ENCODE measurements at regions of chr10 and their contacts with region 1.

Region 1: GRCh38 chr10:23376229-23376655 is 31.6 kb upstream of the C10orf67 start:
- DNase-seq: no peak
- H3K4me3 ChIP-seq: no peak overlapping the region
- H3K27ac ChIP-seq: no peak overlapping the region
- H3K4me1 ChIP-seq: peaks cover 6% of the 10 kb centered on the region
- CTCF ChIP-seq: no peak

Region 2: DNA sequence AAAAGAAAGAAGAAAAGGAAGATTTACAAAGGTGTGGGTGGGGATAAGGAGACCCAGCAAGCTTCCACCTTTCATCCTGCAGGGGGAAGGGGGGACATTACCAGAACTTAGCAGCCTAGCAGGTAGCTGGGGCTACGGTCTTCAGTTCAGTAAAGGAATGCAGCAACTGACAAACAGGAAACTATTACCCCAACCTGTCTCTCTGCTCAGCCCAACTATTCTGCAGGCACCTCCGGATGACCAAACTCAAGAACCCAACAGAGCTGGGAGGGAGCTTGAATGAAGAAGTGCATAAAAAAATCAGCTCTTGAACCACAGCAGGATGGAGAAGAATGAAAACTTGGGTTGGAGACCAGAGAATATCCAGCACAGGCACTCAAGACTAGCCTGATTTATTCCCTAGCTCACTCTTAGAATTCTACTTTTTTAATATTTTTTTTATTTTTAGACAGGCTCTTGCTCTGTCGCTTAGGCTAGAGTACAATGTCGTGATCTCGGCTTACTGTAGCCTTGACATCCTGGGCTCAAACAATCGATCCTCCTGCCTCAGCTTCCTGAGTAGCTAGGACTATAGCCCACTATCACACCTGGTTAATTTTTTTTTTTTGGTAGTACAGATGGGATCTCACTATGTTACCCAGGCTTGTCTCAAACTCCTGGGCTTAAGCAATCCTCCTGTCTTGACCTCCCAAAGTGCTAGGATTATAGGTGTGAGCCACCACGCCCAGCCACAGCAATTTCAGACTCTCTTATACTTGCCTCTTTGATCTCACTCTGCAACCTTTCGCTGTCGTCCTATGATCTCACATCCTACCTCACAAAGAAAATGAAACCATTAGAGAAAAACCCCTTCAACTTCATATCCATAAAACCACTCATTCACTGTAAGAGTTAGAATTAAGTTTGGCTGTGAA is 13.1 kb before region 1 on chr10:
- CTCF ChIA-PET with region 1: no interaction called
- POLR2A ChIA-PET with region 1: interaction called, 17 read pairs
- intact Hi-C with region 1: no loop called
- DNase-seq: peak; percentile 16
- H3K4me3 ChIP-seq: no peak overlapping the region
- H3K27ac ChIP-seq: no peak overlapping the region
- H3K4me1 ChIP-seq: peaks cover 37% of the 10 kb centered on the region
- CTCF ChIP-seq: no peak

Region 3: GRCh38 chr10:23754179-23754578 is 377.9 kb after region 1 on chr10:
- CTCF ChIA-PET with region 1: no interaction called
- POLR2A ChIA-PET with region 1: no interaction called
- intact Hi-C with region 1: no loop called
- DNase-seq: no peak
- H3K4me3 ChIP-seq: no peak overlapping the region
- H3K27ac ChIP-seq: no peak overlapping the region
- H3K4me1 ChIP-seq: no peaks in the 10 kb centered on the region
- CTCF ChIP-seq: no peak

Region 4: DNA sequence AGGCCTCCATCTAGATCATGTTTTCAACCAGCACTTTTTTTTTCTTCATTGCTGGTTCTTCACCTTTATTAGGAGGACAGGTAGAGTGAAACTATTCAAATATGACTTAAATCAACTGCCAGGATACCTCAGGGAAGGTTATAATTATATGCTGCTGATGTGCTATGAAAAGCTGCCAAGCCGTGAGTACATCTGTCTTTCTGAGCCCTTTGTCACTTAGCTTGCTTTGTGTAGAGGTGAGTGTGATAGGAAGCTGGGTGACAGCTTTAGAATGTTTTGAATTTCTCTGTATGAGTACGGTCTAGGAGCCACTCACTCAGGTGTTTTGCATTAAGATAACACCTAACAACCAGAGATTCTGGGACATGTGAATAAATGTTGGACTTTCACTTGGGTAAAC is 427.9 kb after region 1 on chr10:
- CTCF ChIA-PET with region 1: no interaction called
- POLR2A ChIA-PET with region 1: no interaction called
- intact Hi-C with region 1: no loop called
- DNase-seq: no peak
- H3K4me3 ChIP-seq: no peak overlapping the region
- H3K27ac ChIP-seq: no peak overlapping the region
- H3K4me1 ChIP-seq: no peaks in the 10 kb centered on the region
- CTCF ChIP-seq: no peak

Region 5: GRCh38 chr10:24292304-24293293 is 916.4 kb after region 1 on chr10:
- CTCF ChIA-PET with region 1: no interaction called
- POLR2A ChIA-PET with region 1: no interaction called
- intact Hi-C with region 1: no loop called
- DNase-seq: no peak
- H3K4me3 ChIP-seq: no peak overlapping the region
- H3K27ac ChIP-seq: no peak overlapping the region
- H3K4me1 ChIP-seq: no peaks in the 10 kb centered on the region
- CTCF ChIP-seq: no peak